AG04449 (cell line): ENCODE measurements at regions of chr6 and their contacts with region 1.

Region 1: GRCh38 chr6:159693128-159693893 is at the start of gene SOD2:
- DNase-seq: no peak
- H3K4me3 ChIP-seq: peak within 1 kb of the TSS; percentile 76
- CTCF ChIP-seq: no peak

Region 2: DNA sequence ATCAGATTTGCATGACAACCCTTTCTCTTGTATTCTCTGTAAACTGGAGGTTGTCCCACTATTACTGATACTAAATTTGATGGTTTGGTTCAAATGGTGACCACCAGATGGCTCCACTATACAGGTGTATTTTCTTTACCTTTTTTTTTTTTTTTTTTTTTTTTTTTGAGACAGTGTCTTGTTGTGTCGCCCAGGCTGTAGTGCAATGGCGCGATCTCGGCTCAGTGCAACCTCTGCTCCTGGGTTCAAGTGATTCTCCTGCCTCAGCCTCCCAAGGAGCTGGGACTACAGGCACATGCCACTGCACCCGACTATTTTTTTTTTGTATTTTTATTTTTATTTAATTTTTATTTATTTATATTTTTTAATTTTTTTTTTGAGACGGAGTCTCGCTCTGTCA is 27.4 kb after region 1 on chr6:
- CTCF ChIA-PET with region 1: interaction called, 14 read pairs
- POLR2A ChIA-PET with region 1: interaction called, 3 read pairs
- DNase-seq: no peak
- H3K4me3 ChIP-seq: no peak overlapping the region
- CTCF ChIP-seq: peak; percentile 18

Region 3: DNA sequence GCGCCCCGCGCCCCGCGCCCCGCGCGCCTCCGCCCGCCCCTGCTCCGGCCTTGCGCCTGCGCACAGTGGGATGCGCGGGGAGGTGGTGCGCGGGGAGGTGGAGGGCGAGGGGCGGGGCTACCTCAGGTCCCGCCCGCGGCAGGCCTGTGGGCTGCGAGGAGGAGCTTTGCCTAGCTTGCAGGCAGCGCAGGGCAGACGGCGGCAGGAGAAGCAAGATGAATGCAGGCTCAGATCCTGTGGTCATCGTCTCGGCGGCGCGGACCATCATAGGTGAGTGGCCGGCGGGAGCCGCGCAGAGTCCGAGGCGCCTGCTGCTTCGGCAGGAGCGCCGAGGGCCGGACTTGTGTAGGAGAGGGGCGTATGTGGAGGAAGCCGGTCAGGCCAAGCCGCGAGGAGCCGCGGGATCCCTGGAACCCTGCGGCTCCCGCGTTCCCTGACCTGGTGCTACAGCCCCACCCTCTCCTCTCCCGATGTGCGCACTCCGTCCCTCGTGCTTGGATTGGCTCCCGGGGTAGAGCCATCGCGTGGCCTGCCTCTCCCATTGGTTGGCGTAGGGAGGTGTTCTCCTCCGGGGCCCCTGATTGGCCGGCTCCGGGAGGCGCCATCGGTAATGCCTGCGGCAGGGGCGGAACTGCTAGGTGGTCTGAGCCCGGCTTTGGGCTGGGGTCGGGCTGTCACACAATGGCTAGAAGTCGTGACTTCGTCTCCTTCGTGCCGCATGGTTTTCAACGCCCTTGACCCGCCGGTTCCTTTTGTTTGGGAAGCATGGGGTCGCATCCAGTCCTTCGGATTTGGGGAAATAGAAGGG is 68.8 kb after region 1 on chr6 and contains the start of gene ACAT2:
- CTCF ChIA-PET with region 1: interaction called, 19 read pairs
- POLR2A ChIA-PET with region 1: interaction called, 4 read pairs
- DNase-seq: peak; percentile 61
- H3K4me3 ChIP-seq: peak within 1 kb of the TSS; percentile 92
- CTCF ChIP-seq: no peak

Region 4: GRCh38 chr6:159852877-159853276 is 159.6 kb after region 1 on chr6:
- CTCF ChIA-PET with region 1: interaction called, 46 read pairs
- POLR2A ChIA-PET with region 1: no interaction called
- DNase-seq: no peak
- H3K4me3 ChIP-seq: no peak overlapping the region
- CTCF ChIP-seq: no peak